Heart right ventricle (tissue), 16 donors: ENCODE measurements at regions of chr13 and their contacts with region 1.

Region 1: DNA sequence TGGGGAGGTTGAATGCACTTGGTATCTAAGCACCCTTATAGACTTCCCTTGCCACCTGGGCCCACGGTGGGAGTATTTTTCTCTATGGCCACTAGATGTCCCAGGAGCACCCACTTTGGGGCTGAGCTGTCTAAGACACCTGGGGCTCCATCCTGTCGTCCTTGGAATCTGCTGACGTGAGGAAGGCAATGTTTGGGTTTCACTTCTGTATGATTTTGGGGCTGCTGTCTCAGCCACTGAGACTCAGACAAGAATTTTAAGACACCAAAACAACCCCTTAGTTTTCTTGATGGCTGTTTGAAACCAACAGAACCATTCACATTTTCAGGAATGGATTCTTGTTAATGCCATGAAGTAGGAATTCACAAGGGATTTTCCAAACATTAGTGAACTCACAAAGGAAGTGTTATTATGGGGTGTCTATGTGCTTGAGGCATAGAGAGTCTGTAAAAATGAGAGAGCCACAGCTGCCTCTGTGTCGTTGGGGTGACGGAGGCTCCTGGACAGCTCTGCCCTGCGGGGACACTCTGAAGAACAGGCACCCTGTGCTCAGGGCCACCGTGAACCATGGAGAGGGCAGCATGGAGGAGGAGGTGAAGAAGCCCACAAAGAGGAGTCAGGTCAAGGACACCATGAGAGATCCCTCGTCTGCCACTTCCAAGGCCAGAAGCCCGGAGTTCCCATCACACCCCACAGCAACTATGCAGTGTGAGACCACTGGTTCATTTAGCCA is 106.8 kb upstream of the SPATA13 start:
- DNase-seq: peak in 1 of 2 donors; percentile 56
- ATAC-seq: peak; percentile 70 to 91 (median 80)
- H3K4me3 ChIP-seq: peak overlapping the region in 2 of 10 donors; percentile 1 to 27
- H3K27ac ChIP-seq: peak overlapping the region in 8 of 10 donors; percentile 5 to 69 (median 38)
- H3K4me1 ChIP-seq: peaks cover 0 to 62% (median 29%) of the 10 kb centered on the region in 9 donors
- H3K27me3 ChIP-seq: no peaks in the 10 kb centered on the region
- CTCF ChIP-seq: peak; percentile 49 to 79 (median 67)

Region 2: DNA sequence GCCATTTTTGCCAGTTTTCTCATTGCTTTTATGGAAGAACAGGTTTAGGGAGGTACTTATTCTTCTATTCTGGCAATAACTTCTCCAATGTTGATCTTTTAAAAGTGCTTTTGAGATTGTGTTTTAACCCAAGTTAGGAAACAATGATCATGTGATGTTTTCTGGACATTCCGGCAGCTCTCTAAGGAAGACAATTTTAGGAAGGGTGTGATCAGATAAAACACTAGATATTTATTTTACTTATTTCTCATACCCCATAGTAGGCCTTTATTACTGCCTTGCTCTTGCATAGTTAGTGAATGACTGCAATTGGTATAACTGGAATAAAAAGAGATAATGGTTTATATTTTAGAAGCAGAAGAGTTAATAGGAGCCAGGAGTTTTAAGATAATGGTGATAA is 38.4 kb after region 1 on chr13:
- intact Hi-C with region 1: loop called in 1 of 10 experiments (anchors 2 kb)
- DNase-seq: no peak
- ATAC-seq: peak in 5 of 8 donors; percentile 51 to 81 (median 71)
- H3K4me3 ChIP-seq: no peak overlapping the region
- H3K27ac ChIP-seq: peak overlapping the region in 7 of 10 donors; percentile 20 to 71 (median 62)
- H3K4me1 ChIP-seq: peaks cover 0 to 47% (median 12%) of the 10 kb centered on the region in 9 donors
- H3K27me3 ChIP-seq: no peaks in the 10 kb centered on the region
- CTCF ChIP-seq: no peak

Region 3: GRCh38 chr13:24160454-24161009 is 106.8 kb after region 1 on chr13 and contains the start of gene SPATA13:
- intact Hi-C with region 1: loop called in 4 of 10 experiments (anchors 2 to 10 kb)
- DNase-seq: peak; percentile 92 to 94
- ATAC-seq: peak; percentile 97 to 99 (median 98)
- H3K4me3 ChIP-seq: peak within 1 kb of the TSS; percentile 79 to 96 (median 88)
- H3K27ac ChIP-seq: peak within 1 kb of the TSS; percentile 71 to 87 (median 81)
- H3K4me1 ChIP-seq: peaks cover 0 to 41% (median 21%) of the 10 kb centered on the region in 9 donors
- H3K27me3 ChIP-seq: peaks cover 0 to 22% (median 6%) of the 10 kb centered on the region in 7 donors
- CTCF ChIP-seq: no peak
- total RNA-seq, gene SPATA13: 6.0 to 19.2 (median 10.2) TPM